ENCODE measurements at regions of chr3 and their contacts with region 1.

Region 1: GRCh38 chr3:24680214-24680967 is 185.7 kb upstream of the THRB start:
- DNase-seq: peak in 1 of 2 donors; percentile 77
- H3K4me3 ChIP-seq: no peak overlapping the region
- H3K27ac ChIP-seq: peak overlapping the region in 1 of 2 donors; percentile 34
- H3K4me1 ChIP-seq: peaks cover 0 to 9% of the 10 kb centered on the region in 2 donors
- H3K27me3 ChIP-seq: no peaks in the 10 kb centered on the region
- CTCF ChIP-seq: peak; percentile 55 to 86 (median 80)

Region 2: GRCh38 chr3:23888617-23889228 is 791.7 kb before region 1 on chr3:
- intact Hi-C with region 1: loop called (anchors 5 kb)
- DNase-seq: no peak
- H3K4me3 ChIP-seq: no peak overlapping the region
- H3K27ac ChIP-seq: no peak overlapping the region
- H3K4me1 ChIP-seq: no peaks in the 10 kb centered on the region
- H3K27me3 ChIP-seq: no peaks in the 10 kb centered on the region
- CTCF ChIP-seq: peak; percentile 74 to 79 (median 78)

Region 3: GRCh38 chr3:23999012-23999641 is 681.3 kb before region 1 on chr3:
- intact Hi-C with region 1: loop called (anchors 2 kb)
- DNase-seq: peak in 1 of 2 donors; percentile 92
- H3K4me3 ChIP-seq: no peak overlapping the region
- H3K27ac ChIP-seq: peak overlapping the region in 1 of 2 donors; percentile 42
- H3K4me1 ChIP-seq: peaks cover 0 to 8% of the 10 kb centered on the region in 2 donors
- H3K27me3 ChIP-seq: no peaks in the 10 kb centered on the region
- CTCF ChIP-seq: peak; percentile 91 to 95 (median 94)

Region 4: DNA sequence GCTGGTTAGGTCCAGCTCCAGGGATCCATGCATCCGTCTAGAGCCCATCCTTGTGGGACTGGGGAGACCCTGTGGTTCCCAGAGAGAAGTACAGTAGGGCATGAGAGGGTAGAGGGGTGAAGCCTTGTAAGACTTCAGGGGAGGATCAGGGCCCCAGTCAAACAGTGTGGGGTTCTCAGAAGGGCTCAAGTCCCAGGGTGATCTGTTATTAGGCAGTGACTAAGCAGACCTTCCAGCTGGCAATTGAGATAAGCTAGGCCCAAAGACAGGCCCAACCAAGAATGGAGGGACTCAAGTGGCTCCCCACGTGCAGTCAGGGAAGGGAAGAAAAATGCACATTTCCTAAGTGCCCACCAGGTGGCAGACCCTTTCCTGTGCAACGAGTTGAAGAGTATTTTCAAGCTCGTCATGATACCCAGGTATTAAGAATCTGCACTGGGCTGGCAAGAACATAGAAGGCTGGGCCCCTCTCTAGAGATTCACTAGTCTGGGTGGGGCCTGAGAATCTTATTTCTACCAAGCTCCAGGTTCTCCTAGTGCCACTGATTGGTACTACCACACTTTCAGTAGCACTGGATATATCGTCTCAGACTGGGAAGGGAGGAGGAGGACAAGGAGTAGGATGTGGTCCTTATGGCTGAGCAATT is 494.5 kb before region 1 on chr3:
- intact Hi-C with region 1: loop called (anchors 10 kb)
- DNase-seq: peak in 1 of 2 donors; percentile 69
- H3K4me3 ChIP-seq: no peak overlapping the region
- H3K27ac ChIP-seq: peak overlapping the region; percentile 66 to 87
- H3K4me1 ChIP-seq: peaks cover 0 to 36% of the 10 kb centered on the region in 2 donors
- H3K27me3 ChIP-seq: no peaks in the 10 kb centered on the region
- CTCF ChIP-seq: peak; percentile 54 to 65 (median 58)

Region 5: DNA sequence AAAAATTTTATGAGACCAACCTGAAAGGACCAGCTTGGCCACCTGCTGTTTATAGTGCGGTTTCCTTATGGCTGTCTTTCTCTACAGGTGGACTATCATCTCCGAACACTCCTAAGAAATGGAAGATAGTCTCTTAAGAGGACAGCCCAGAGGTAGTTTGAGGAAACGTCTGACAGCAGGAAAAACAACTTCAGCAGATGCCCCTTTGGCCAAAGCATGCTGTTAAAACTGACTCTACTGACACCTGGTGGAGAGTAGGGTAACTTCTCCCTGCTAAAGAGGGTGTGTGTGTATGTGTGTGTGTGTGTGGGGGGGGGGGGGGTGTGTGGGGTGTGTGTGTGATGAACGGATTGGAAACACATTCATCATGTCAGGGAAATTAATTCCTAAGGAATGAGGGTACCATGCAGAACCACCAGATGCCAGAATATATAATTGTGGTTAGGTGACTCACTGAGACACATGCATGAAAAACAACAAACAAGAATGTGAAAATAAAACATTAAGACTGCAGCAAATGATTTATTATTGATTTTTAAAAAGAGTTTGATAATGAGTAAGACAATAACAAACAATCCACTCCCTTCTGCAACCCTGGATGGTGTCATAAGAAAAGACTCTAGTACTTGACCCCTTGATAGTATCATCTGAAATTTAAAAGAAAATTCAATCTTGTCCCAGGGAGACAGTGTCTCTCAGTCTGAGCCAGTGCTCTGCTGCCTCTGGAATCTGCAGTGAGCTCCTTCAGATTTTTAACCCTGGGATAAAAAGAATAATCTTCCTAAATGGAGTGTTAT is 442.2 kb before region 1 on chr3:
- intact Hi-C with region 1: loop called (anchors 5 kb)
- DNase-seq: no peak
- H3K4me3 ChIP-seq: no peak overlapping the region
- H3K27ac ChIP-seq: peak overlapping the region; percentile 72 to 80
- H3K4me1 ChIP-seq: peaks cover 3 to 34% of the 10 kb centered on the region in 2 donors
- H3K27me3 ChIP-seq: no peaks in the 10 kb centered on the region
- CTCF ChIP-seq: peak; percentile 61 to 77 (median 71)

Region 6: DNA sequence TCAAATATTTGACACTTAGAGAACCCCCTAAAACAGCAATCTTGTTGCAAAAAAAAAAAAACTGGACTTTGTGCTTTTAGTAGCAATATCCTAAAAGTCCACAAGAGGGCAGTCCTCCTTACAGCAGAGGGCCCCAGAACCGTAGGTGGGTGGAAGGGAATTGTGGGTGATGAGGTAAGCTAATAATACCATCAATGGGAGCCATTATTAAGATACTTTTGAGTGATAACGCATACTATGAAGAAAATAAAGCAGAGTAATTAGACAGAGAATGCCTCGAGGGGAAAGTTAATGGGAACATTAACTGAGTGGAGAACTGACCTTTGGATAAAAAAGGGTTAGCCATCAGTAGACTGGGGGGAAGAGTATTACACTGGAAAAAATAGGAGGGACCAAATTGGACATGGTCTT is 415.6 kb before region 1 on chr3:
- intact Hi-C with region 1: loop called (anchors 5 kb)
- DNase-seq: no peak
- H3K4me3 ChIP-seq: no peak overlapping the region
- H3K27ac ChIP-seq: no peak overlapping the region
- H3K4me1 ChIP-seq: peaks cover 0 to 24% of the 10 kb centered on the region in 2 donors
- H3K27me3 ChIP-seq: no peaks in the 10 kb centered on the region
- CTCF ChIP-seq: peak; percentile 51 to 67 (median 55)

Region 7: GRCh38 chr3:24521420-24522145 is 158.8 kb before region 1 on chr3:
- intact Hi-C with region 1: loop called (anchors 5 kb)
- DNase-seq: peak in 1 of 2 donors; percentile 75
- H3K4me3 ChIP-seq: peak overlapping the region; percentile 91 to 93
- H3K27ac ChIP-seq: peak overlapping the region; percentile 90 to 91
- H3K4me1 ChIP-seq: peaks cover 0 to 8% of the 10 kb centered on the region in 2 donors
- H3K27me3 ChIP-seq: no peaks in the 10 kb centered on the region
- CTCF ChIP-seq: peak in 1 of 3 experiments; percentile 42

Measured in ascending aorta (tissue), 2 donors.